Activated naive CD4-positive, alpha-beta T cell treated with anti-CD3 and anti-CD28 coated beads for 36 hours (primary cell): ENCODE measurements at regions of chr22 and their contacts with region 1.

Region 1: GRCh38 chr22:30005213-30005857 is 74.9 kb upstream of the HORMAD2 start:
- DNase-seq: peak; percentile 81
- H3K4me3 Mint-ChIP-seq: no peak overlapping the region
- H3K27ac Mint-ChIP-seq: no peak overlapping the region
- H3K4me1 Mint-ChIP-seq: peaks cover 16% of the 10 kb centered on the region
- H3K27me3 Mint-ChIP-seq: no peaks in the 10 kb centered on the region

Region 2: DNA sequence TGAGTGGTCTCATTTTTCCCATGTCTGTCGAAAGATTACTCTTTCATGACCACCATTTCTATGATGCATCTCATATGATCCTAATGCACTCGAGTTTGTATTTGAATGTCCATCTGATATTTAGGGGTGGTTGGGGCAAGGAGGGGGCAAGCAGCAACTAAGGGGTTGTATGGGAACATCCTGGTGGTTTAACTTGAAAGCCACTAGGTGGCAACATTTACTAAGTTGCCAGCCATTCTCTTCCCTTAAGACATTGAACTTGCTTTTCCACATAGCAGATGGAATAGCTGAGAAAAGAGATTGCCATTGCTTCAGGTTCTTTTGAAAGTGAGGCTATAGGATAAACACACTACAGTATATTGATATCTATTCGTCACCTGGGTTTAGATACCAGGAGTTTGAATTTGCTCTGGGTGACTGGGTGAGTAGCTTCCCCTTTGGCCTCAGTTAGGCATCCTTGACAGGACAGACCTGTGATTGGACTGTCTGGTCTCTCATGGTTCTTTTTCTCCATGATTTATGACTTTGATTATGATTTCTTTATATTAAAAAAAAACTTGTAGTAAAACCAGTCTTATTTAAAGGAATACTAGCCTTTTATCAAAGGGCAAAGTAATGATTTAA is 369.5 kb before region 1 on chr22:
- CTCF ChIA-PET with region 1: interaction called, 9 read pairs
- intact Hi-C with region 1: loop called (anchors 2 kb)
- DNase-seq: no peak
- H3K4me3 Mint-ChIP-seq: no peak overlapping the region
- H3K27ac Mint-ChIP-seq: no peak overlapping the region
- H3K4me1 Mint-ChIP-seq: peaks cover 21% of the 10 kb centered on the region
- H3K27me3 Mint-ChIP-seq: no peaks in the 10 kb centered on the region

Region 3: GRCh38 chr22:29766632-29767170 is 238.6 kb before region 1 on chr22 and contains the start of gene ZMAT5:
- CTCF ChIA-PET with region 1: interaction called, 3 read pairs
- intact Hi-C with region 1: loop called (anchors 1 kb)
- DNase-seq: peak; percentile 97
- H3K4me3 Mint-ChIP-seq: peak within 1 kb of the TSS; percentile 96
- H3K27ac Mint-ChIP-seq: peak within 1 kb of the TSS; percentile 91
- H3K4me1 Mint-ChIP-seq: peaks cover 33% of the 10 kb centered on the region
- H3K27me3 Mint-ChIP-seq: no peaks in the 10 kb centered on the region
- total RNA-seq, gene ZMAT5: 14.3 to 15.3 TPM

Region 4: GRCh38 chr22:29837780-29838598 is 167.3 kb before region 1 on chr22 and contains the start of gene ASCC2:
- CTCF ChIA-PET with region 1: interaction called, 10 read pairs
- intact Hi-C with region 1: loop called (anchors 1 kb)
- DNase-seq: peak; percentile 100
- H3K4me3 Mint-ChIP-seq: peak within 1 kb of the TSS; percentile 94
- H3K27ac Mint-ChIP-seq: peak within 1 kb of the TSS; percentile 92
- H3K4me1 Mint-ChIP-seq: peaks cover 34% of the 10 kb centered on the region
- H3K27me3 Mint-ChIP-seq: no peaks in the 10 kb centered on the region
- total RNA-seq, gene ASCC2: 57.6 to 60.4 TPM

Region 5: DNA sequence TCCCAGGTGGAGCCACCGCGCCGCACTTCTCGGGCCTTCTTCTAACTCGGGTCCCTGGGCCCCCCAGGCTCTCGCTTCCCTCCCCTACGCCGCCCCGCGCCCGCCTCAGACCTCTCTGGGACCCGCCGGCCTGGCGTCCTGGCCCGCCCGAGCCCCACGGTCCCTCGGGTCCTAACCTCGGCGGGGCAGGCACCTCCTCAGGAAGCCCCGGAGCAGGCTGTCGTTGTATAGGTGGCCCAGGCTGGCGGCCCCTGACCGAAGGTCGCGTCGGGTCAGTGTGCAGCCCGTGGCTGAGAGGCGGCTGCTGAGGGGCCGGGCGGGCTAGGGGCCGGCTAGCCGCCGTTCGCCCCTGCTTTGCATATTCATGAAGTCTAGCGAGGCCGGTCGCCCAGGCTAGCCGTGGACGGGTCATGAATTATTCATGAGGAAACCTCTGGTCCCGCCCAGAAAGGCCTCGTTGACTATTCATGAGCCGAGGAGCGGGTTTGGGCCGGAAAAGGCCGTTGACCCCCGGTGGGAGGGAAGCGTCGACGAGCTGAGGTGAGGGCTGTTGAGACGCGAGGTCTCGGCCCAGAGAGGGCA is 74.7 kb after region 1 on chr22 and contains the start of gene HORMAD2:
- CTCF ChIA-PET with region 1: interaction called, 10 read pairs
- intact Hi-C with region 1: loop called (anchors 2 kb)
- DNase-seq: no peak
- H3K4me3 Mint-ChIP-seq: no peak within 1 kb of the TSS
- H3K27ac Mint-ChIP-seq: no peak within 1 kb of the TSS
- H3K4me1 Mint-ChIP-seq: peaks cover 22% of the 10 kb centered on the region
- H3K27me3 Mint-ChIP-seq: peaks cover 5% of the 10 kb centered on the region
- total RNA-seq, gene HORMAD2: not detected

Region 6: GRCh38 chr22:30408414-30409104 is 403.2 kb after region 1 on chr22:
- CTCF ChIA-PET with region 1: no interaction called
- intact Hi-C with region 1: no loop called
- DNase-seq: no peak
- H3K4me3 Mint-ChIP-seq: no peak overlapping the region
- H3K27ac Mint-ChIP-seq: no peak overlapping the region
- H3K4me1 Mint-ChIP-seq: peaks cover 20% of the 10 kb centered on the region
- H3K27me3 Mint-ChIP-seq: no peaks in the 10 kb centered on the region